ENCODE measurements at regions of chr4 and their contacts with region 1.

Region 1: GRCh38 chr4:54784161-54784671 is 126.5 kb downstream of the KIT start:
- DNase-seq: peak; percentile 11 to 90 (median 80)
- H3K4me3 ChIP-seq: peak overlapping the region in 16 of 59 donors; percentile 1 to 36 (median 14)
- H3K27ac ChIP-seq: peak overlapping the region; percentile 40 to 94 (median 82)
- H3K27me3 ChIP-seq: no peaks in the 10 kb centered on the region
- CTCF ChIP-seq: peak in 4 of 56 donors; percentile 14 to 35 (median 20)

Region 2: DNA sequence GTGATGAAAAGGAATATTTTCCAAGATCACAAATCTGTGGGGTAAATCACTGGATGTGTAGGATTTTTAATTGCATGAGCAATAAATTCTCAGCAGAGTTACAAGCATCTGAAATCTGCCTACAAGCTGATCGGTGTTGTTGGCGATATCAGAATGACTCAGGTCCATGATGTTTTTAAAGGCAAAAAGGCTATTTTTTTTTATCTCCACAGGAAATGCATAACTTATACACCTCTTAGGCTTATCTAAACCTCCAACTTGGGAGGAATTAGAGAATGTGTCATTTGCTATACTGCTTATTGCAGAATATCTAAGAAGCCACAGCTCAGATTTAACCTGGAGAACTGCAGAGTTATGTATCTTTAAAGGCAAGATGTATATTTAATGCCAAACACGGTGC is 64.8 kb before region 1 on chr4:
- intact Hi-C with region 1: loop called in 1 of 2 experiments (anchors 5 kb)
- DNase-seq: no peak
- H3K4me3 ChIP-seq: no peak overlapping the region
- H3K27ac ChIP-seq: no peak overlapping the region
- H3K27me3 ChIP-seq: peaks cover 0 to 6% (median 0%) of the 10 kb centered on the region in 45 donors
- CTCF ChIP-seq: no peak

Region 3: GRCh38 chr4:54742636-54743399 is 41.4 kb before region 1 on chr4:
- intact Hi-C with region 1: loop called in 1 of 2 experiments (anchors 5 kb)
- DNase-seq: no peak
- H3K4me3 ChIP-seq: no peak overlapping the region
- H3K27ac ChIP-seq: peak overlapping the region in 1 of 59 donors; percentile 80
- H3K27me3 ChIP-seq: peaks cover 0 to 3% (median 0%) of the 10 kb centered on the region in 45 donors
- CTCF ChIP-seq: no peak

Region 4: DNA sequence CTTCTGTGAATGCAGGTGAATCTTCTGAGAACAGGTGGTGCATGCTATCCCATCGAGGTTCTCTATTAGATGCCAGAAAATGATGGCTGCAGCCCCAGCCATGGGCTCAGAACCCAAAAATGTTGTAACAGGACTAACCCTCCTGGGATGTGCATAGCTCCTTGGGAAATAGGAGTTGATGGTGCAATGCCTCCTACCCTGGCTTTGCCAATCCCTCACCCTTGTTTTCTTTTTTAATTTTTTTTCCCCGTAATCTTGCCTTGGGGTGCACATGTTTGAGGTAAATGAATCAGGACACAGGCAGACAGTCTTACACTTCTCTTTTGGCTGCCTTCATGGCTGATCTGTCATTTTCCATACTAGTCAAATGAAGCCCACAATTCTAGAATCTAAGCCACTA is 29.8 kb before region 1 on chr4:
- intact Hi-C with region 1: no loop called
- DNase-seq: no peak
- H3K4me3 ChIP-seq: no peak overlapping the region
- H3K27ac ChIP-seq: no peak overlapping the region
- H3K27me3 ChIP-seq: no peaks in the 10 kb centered on the region
- CTCF ChIP-seq: no peak

Region 5: GRCh38 chr4:54840992-54841768 is 57.0 kb after region 1 on chr4:
- intact Hi-C with region 1: loop called in 1 of 2 experiments (anchors 5 kb)
- DNase-seq: peak in 4 of 10 donors; percentile 15 to 47 (median 38)
- H3K4me3 ChIP-seq: no peak overlapping the region
- H3K27ac ChIP-seq: peak overlapping the region in 4 of 59 donors; percentile 10 to 42 (median 20)
- H3K27me3 ChIP-seq: no peaks in the 10 kb centered on the region
- CTCF ChIP-seq: peak in 35 of 56 donors; percentile 16 to 57 (median 32)

Region 6: DNA sequence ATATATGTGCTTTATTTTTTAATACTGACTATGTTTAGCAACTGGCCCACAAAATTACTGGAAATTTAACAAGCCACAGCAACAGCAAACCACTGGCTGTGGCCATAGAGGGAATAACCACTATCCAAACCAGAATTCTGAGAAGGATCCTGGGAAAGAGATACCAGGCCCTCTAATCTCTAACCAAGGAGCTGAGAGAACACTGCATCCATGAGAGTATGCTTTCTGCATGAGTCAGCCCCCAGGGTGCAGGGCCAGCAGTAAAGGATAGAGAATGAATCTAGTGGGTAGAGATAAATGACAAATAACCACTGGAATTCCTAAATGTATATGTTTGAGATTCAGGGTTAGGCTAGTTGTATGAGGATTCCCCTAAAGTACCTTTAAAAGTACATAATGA is 95.4 kb after region 1 on chr4:
- intact Hi-C with region 1: no loop called
- DNase-seq: no peak
- H3K4me3 ChIP-seq: no peak overlapping the region
- H3K27ac ChIP-seq: no peak overlapping the region
- H3K27me3 ChIP-seq: peaks cover 0 to 4% (median 0%) of the 10 kb centered on the region in 45 donors
- CTCF ChIP-seq: no peak